GM10248 (cell line): ENCODE measurements at regions of chr7 and their contacts with region 1.

Region 1: GRCh38 chr7:94054130-94054529 is 50.0 kb upstream of the BET1 start:
- DNase-seq: no peak
- CTCF ChIP-seq: no peak

Region 2: DNA sequence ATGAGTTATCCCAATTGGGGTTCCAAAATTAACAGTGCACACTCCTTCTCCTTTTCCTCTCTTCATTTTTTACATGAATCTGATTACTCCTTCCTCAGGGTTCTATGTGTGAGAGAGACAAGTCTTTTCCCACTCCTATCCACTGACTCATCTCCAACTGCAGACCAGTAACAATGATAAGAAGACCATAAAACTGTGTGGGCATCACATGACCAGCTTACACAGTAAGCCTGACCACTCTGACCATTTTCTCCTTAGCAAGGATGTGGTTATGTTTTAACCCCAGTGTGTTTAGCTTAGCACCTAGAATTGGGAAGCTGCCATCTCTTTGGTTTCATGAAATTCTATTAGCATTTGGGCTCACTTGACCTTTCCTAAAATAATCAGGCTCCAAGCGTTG is 334.6 kb before region 1 on chr7:
- CTCF ChIA-PET with region 1: no interaction called
- POLR2A ChIA-PET with region 1: no interaction called
- DNase-seq: no peak
- CTCF ChIP-seq: no peak

Region 3: DNA sequence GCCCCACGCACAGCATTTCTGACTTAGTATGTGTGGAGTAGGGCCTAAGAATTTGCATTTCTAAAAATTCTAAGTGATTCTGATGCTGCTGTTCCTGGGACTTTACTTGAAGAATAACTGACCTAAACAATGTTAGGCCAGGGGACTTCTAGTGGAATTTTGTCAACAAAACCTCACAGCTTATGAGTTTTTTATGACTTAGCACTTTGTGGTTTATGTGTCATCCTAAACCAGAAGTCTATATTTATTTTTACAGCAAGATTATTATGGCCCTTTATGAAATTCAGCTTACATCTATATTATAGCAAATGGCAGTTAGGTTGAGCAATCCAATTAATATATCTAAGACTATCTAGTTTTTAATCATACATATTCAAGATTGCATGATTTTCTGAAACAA is 25.4 kb before region 1 on chr7:
- CTCF ChIA-PET with region 1: no interaction called
- POLR2A ChIA-PET with region 1: no interaction called
- DNase-seq: no peak
- CTCF ChIP-seq: no peak

Region 4: GRCh38 chr7:94042381-94042780 is 11.7 kb before region 1 on chr7:
- CTCF ChIA-PET with region 1: interaction called, 11 read pairs
- POLR2A ChIA-PET with region 1: no interaction called
- DNase-seq: peak; percentile 18
- CTCF ChIP-seq: no peak

Region 5: GRCh38 chr7:94145602-94146001 is 91.5 kb after region 1 on chr7:
- CTCF ChIA-PET with region 1: no interaction called
- POLR2A ChIA-PET with region 1: no interaction called
- DNase-seq: no peak
- CTCF ChIP-seq: no peak